ENCODE measurements at regions of chr11 and their contacts with region 1.

Region 1: DNA sequence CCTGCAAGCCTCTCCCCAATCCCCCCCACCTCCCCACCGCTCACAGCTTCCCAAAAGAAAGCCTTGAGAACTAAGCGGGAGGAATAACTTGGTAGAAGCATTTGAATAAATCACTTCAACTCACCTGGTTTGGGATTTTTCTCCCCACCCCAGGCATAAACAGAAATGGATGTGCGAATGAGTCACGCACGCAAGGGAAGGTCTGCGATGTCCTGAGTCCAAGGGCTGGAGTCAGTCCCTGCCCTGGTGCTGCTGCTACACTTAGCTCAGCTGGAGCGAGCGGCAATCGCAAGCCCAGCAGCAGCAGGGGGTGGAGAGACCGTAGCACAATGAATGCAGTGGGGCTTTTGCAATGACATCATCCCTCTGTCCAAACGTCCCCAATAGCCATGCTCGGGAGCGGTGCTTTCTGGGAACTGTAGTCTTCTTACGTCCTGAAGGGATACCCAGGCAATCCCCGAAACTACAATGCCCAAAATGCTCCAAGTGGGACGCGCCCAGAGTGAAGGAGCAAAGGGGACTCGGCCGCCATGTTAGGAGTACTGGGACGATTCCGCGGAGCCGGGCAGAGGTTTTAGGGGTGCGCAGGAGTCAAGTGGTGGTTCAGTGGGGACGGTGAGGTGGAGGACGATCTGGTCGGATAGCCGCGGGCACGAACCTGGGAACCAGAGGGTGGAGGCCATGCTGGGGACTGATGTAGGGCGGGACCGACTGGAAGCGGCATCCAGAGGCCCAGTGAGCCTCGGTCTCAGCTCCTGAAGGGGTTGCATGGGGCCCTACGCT is at the start of gene RAB30:
- DNase-seq: peak; percentile 84 to 99 (median 89)
- ATAC-seq: peak; percentile 91
- H3K4me3 ChIP-seq: peak within 1 kb of the TSS; percentile 68
- H3K4me3 Mint-ChIP-seq: no peak within 1 kb of the TSS
- H3K27ac ChIP-seq: peak within 1 kb of the TSS; percentile 78 to 91
- H3K27ac Mint-ChIP-seq: no peak within 1 kb of the TSS
- H3K4me1 ChIP-seq: peaks cover 35% of the 10 kb centered on the region
- H3K4me1 Mint-ChIP-seq: no peaks in the 10 kb centered on the region
- H3K27me3 ChIP-seq: no peaks in the 10 kb centered on the region
- H3K27me3 Mint-ChIP-seq: no peaks in the 10 kb centered on the region
- CTCF ChIP-seq: no peak
- total RNA-seq, gene RAB30: 76.2 to 79.2 TPM

Region 2: DNA sequence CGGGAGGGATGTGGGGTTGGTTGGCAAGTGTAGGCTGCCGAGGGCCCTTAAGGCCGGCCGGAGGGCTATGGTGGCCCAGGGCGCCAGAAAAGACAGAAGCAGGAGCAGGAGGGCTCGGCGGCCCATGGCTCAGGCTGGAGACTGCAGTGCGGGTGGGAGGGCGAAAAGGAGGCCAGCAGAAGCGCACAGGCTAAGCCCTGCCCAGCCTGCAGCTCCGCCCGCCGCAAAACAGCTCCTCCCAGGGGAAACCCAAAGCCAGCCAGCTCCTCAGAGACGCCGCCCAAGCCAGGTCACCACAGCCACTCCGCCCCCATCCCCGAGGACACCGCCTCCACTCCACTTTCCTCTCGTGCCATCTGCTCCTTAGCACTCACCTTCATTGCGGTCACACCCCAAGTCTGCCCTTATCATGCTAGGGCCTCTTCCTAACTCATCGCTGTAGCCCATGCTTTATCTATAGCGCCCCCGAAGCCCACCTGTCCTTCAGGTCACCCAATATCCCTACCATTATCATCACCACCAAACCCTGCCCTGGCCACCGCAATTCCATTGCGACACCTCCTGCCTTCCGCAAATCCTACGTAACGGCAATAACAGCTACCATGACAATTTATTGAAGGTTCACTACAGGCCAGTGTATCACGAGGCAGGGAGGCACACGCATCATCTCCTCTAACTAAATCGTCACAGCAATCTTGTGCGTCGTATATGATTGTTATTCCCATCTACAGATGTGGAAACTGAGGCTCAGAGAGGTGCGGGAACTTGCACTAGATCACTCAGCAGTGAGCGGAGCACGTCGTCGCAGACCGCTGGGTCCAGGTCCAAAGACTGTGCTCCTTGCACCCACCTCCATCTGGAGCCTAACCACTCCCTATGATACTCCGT is 171.2 kb before region 1 on chr11 and contains the start of gene PRCP:
- CTCF ChIA-PET with region 1: interaction called, 3 read pairs
- POLR2A ChIA-PET with region 1: interaction called, 80 read pairs
- intact Hi-C with region 1: loop called in 1 of 2 experiments (anchors 1 kb)
- DNase-seq: peak; percentile 81 to 97 (median 91)
- ATAC-seq: peak; percentile 72
- H3K4me3 ChIP-seq: peak within 1 kb of the TSS; percentile 74
- H3K4me3 Mint-ChIP-seq: peak within 1 kb of the TSS; percentile 99
- H3K27ac ChIP-seq: peak within 1 kb of the TSS; percentile 94 to 98
- H3K27ac Mint-ChIP-seq: peak within 1 kb of the TSS; percentile 97
- H3K4me1 ChIP-seq: peaks cover 35% of the 10 kb centered on the region
- H3K4me1 Mint-ChIP-seq: peaks cover 42% of the 10 kb centered on the region
- H3K27me3 ChIP-seq: no peaks in the 10 kb centered on the region
- H3K27me3 Mint-ChIP-seq: no peaks in the 10 kb centered on the region
- CTCF ChIP-seq: no peak
- total RNA-seq, gene PRCP: 13.7 to 16.0 TPM

Region 3: DNA sequence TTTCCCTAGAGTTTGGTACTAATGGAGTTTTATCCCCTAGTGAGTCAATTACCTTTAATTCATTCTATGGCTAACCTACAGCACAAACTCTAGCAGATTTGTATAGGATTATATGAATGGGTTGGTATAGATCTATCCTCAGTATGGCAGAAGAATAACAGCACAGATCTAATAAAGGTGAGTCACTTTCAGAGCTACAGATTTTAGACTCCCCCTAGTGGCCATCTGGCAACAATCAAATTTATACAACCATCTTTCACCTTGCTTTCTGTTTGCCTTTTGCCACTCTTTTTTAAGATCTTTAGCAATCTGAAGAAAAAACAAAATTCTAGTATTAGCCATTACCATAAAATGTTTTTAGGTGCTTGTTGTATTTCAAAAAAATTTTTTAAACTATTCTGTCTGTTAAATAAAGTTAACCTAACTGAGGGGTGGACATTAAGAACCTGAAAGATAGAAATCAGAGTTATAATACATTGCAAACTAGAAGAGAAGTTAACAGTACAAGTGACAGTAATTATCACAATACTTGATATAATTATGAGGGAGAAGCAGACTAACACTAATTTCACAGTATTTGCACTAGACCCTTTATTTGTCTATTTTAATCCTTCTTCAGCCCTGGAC is 144.4 kb before region 1 on chr11:
- CTCF ChIA-PET with region 1: no interaction called
- POLR2A ChIA-PET with region 1: interaction called, 6 read pairs
- intact Hi-C with region 1: loop called in 1 of 2 experiments (anchors 2 kb)
- DNase-seq: peak in 8 of 14 experiments; percentile 7 to 82 (median 44)
- ATAC-seq: peak; percentile 98
- H3K4me3 ChIP-seq: no peak overlapping the region
- H3K4me3 Mint-ChIP-seq: peak overlapping the region; percentile 1
- H3K27ac ChIP-seq: no peak overlapping the region
- H3K27ac Mint-ChIP-seq: peak overlapping the region; percentile 64
- H3K4me1 ChIP-seq: peaks cover 2% of the 10 kb centered on the region
- H3K4me1 Mint-ChIP-seq: peaks cover 44% of the 10 kb centered on the region
- H3K27me3 ChIP-seq: no peaks in the 10 kb centered on the region
- H3K27me3 Mint-ChIP-seq: no peaks in the 10 kb centered on the region
- CTCF ChIP-seq: peak; percentile 97

Region 4: GRCh38 chr11:82996966-82997606 is 74.7 kb before region 1 on chr11:
- CTCF ChIA-PET with region 1: no interaction called
- POLR2A ChIA-PET with region 1: no interaction called
- intact Hi-C with region 1: loop called in 1 of 2 experiments (anchors 5 kb)
- DNase-seq: no peak
- ATAC-seq: no peak
- H3K4me3 ChIP-seq: no peak overlapping the region
- H3K4me3 Mint-ChIP-seq: no peak overlapping the region
- H3K27ac ChIP-seq: no peak overlapping the region
- H3K27ac Mint-ChIP-seq: no peak overlapping the region
- H3K4me1 ChIP-seq: peaks cover 8% of the 10 kb centered on the region
- H3K4me1 Mint-ChIP-seq: peaks cover 31% of the 10 kb centered on the region
- H3K27me3 ChIP-seq: no peaks in the 10 kb centered on the region
- H3K27me3 Mint-ChIP-seq: no peaks in the 10 kb centered on the region
- CTCF ChIP-seq: no peak

Region 5: DNA sequence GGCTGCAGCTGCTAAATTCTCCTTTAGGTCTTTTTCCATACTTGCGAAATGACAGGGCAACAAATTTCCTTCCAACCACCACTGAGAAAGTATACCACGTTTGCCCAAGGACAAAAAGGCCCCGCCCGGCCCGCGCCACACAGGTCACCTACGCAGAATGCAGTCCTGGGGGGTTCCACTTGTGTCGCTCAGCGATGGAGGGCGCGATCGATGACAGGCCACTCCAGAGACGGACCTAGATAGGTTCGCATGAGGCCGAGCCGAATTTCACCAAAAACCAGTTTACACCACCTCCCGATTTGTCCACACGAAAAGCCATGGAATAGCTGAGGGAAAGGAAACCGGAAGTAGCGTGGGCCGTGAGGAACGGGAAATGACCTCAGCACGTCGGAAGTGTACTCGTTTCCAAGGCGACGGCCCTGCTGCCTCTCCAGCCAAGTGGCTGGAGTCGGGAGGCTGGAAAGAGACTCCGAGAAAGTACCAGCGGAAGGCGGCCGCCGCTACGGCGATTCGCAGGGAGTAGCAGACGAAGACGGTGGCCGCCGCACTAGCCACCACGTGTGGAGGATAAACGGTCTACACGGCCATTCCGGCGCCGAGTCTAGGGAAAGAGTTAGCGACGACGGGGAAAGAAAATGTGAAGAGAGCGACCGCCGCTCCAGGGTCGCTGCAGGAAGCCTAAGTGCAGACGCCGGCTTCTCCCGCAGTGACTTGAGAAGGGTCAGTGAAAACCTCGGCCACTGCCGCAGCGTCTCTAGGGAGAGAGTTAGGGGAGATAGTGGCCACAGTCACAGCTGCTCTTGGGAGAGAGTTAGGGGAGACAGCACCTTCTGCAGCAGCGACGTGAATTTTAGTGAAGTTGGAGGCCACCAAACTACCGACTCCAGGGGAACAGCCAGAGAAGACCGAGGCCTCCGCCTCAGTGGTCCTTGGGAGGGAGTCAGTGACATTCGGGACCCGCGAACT is 121.8 kb after region 1 on chr11 and contains the start of gene ANKRD42:
- CTCF ChIA-PET with region 1: interaction called, 3 read pairs
- POLR2A ChIA-PET with region 1: interaction called, 6 read pairs
- intact Hi-C with region 1: loop called (anchors 1 kb)
- DNase-seq: peak; percentile 65 to 95 (median 76)
- ATAC-seq: peak; percentile 69
- H3K4me3 ChIP-seq: peak within 1 kb of the TSS; percentile 70
- H3K4me3 Mint-ChIP-seq: peak within 1 kb of the TSS; percentile 99
- H3K27ac ChIP-seq: peak within 1 kb of the TSS; percentile 88 to 97
- H3K27ac Mint-ChIP-seq: peak within 1 kb of the TSS; percentile 99
- H3K4me1 ChIP-seq: peaks cover 26% of the 10 kb centered on the region
- H3K4me1 Mint-ChIP-seq: peaks cover 60% of the 10 kb centered on the region
- H3K27me3 ChIP-seq: no peaks in the 10 kb centered on the region
- H3K27me3 Mint-ChIP-seq: no peaks in the 10 kb centered on the region
- CTCF ChIP-seq: no peak
- total RNA-seq, gene ANKRD42: 8.6 to 10.0 TPM